BJ (cell line): ENCODE measurements at regions of chr1 and their contacts with region 1.

Region 1: DNA sequence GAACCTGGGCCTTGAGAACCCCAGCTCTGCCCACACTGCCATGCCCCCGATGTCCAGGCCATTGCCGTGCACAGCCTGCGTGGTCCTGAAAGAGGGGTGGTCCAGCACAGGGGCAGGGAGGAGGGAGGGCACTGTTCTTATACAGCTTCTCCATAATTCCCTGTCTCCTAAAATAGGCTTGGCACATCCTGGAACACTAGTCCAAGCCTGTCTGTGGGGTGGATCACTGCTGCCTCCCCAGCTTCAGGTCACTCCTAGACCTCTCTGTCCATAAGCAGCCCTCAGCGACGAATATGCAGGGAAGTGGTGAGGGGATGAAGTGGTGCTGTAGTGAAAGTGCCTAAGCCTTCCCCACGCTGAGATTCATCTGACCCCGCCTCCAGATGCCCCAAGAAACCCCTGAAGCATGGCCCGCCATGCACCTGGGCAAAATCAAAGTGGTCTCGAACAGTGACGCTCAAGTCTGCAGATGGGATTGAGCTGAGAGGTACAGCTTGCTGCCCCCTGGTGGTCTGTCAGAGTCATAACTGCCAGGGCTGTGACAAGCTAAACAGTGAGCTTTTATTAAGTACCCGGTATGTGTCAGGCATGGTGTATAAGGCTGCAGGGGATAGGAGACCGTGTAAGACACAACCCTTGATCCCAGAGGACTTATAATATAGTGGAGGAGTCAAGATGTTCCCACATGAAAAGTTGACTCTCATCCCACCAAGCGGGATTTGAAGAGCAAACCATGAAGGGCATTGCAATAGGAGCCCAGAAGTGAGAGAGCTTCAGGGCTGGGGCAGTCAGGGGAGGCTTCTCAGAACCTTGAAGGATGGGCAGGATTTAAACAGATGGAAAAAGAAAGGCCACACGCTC is 66.6 kb downstream of the FAM163A start:
- DNase-seq: no peak
- H3K4me3 ChIP-seq: no peak overlapping the region
- H3K27me3 ChIP-seq: peaks cover 7% of the 10 kb centered on the region
- CTCF ChIP-seq: peak; percentile 93

Region 2: GRCh38 chr1:179241523-179242097 is 568.1 kb before region 1 on chr1:
- CTCF ChIA-PET with region 1: no interaction called
- POLR2A ChIA-PET with region 1: no interaction called
- DNase-seq: no peak
- H3K4me3 ChIP-seq: no peak overlapping the region
- H3K27me3 ChIP-seq: no peaks in the 10 kb centered on the region
- CTCF ChIP-seq: no peak

Region 3: DNA sequence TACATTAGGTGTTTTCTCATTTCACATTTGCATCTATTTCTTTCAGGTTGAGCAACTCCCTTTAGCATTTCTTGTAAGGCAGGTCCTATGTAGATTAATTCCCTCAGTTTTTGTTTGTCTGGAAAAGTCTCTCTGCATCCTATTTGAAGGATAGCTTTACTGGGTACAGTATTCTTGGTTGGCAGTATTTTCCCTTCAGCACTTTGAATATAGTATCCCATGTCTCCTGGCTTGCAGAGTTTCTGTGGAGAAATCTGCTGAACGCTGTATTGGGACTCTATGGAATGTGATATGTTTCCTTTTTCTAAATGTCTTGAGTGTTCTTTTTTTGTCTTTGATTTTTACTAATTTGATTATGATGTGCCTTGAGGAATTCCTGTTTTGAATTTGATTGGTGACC is 95.6 kb before region 1 on chr1:
- CTCF ChIA-PET with region 1: interaction called, 447 read pairs
- POLR2A ChIA-PET with region 1: no interaction called
- DNase-seq: no peak
- H3K4me3 ChIP-seq: no peak overlapping the region
- H3K27me3 ChIP-seq: no peaks in the 10 kb centered on the region
- CTCF ChIP-seq: no peak

Region 4: DNA sequence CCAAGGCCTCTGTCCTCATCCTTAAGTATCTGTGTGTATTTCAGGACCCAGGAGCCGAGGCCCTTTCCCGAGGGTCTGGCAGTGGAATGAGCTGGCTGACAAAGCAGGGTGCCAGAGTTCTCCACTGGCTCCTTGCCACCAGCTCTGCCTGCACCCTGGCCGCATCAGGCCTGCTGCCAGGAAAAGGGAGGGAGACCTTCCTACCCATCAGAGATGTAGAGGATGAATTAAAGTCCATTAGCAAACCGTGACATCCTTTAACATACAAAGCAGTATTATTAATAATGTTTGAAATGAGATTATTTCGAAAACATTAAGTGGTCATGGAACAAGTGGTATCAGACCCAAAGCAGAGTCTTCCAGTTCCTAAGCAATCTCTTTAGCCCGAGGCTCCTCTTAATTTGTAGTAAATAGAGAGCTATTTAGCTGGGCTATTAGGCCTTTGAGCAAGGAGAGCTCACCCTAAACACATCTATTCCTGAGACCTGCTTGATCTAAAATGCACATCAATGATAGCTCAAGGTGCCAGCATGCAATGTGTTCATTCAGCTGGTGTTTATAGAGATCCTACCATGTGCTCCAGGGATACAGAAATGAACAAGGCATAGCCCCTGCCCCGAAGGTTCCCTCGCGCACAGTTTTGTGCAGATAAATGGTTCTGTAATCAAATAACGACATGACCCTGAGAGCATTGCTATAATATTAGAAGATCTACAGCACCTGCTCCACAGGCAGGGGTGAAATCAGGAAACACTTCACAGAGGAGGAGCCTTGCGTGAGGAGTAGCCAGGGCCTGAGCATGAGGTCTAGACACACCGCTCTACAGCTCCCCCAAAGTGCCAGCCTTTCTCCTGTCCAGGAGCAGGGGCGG is 22.7 kb before region 1 on chr1:
- CTCF ChIA-PET with region 1: interaction called, 16 read pairs
- POLR2A ChIA-PET with region 1: no interaction called
- DNase-seq: no peak
- H3K4me3 ChIP-seq: no peak overlapping the region
- H3K27me3 ChIP-seq: peaks cover 4% of the 10 kb centered on the region
- CTCF ChIP-seq: no peak

Region 5: DNA sequence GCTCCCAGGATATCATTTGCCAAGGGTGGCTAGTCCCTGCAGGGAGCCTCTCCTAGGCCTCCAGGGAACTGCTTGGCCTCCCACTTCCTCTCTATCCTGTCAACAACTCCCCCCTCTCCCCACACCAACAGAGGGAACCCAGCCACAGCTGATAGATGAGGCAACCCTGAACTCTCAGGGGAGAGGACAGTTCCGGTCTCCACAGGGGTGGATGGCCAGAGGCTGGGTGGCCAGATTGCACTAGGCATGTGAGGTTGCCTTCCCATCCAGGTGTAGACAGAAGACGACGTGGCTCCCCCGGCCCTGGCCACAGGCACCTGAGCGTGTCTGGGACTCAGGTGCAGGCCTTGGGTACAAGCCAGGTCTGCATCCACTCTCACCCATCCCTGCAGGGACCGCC is 14.5 kb after region 1 on chr1:
- CTCF ChIA-PET with region 1: interaction called, 60 read pairs
- POLR2A ChIA-PET with region 1: no interaction called
- DNase-seq: no peak
- H3K4me3 ChIP-seq: no peak overlapping the region
- H3K27me3 ChIP-seq: peaks cover 2% of the 10 kb centered on the region; the same call in 1 of the 2 replicates
- CTCF ChIP-seq: no peak

Region 6: DNA sequence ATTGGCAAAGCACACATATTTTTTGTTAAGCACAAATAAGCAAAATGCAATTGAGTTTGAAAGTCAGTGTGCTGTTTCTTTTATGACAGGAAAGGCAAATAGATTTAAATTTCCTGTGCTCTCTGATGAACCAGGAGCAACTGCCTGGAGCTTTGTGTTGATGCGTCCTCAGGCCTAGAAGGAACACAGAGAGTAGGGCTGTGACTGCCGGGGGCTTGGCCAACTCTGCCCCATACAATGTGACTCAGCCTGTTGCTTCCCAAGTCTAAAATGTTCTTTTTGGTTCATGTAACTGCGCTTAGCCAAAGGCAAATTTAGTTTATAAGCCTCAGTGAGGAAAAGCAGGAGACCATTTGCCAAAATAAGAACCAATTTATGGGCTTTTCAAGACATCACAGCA is 30.4 kb after region 1 on chr1:
- CTCF ChIA-PET with region 1: interaction called, 19 read pairs
- POLR2A ChIA-PET with region 1: no interaction called
- DNase-seq: no peak
- H3K4me3 ChIP-seq: no peak overlapping the region
- H3K27me3 ChIP-seq: no peaks in the 10 kb centered on the region
- CTCF ChIP-seq: no peak

Region 7: DNA sequence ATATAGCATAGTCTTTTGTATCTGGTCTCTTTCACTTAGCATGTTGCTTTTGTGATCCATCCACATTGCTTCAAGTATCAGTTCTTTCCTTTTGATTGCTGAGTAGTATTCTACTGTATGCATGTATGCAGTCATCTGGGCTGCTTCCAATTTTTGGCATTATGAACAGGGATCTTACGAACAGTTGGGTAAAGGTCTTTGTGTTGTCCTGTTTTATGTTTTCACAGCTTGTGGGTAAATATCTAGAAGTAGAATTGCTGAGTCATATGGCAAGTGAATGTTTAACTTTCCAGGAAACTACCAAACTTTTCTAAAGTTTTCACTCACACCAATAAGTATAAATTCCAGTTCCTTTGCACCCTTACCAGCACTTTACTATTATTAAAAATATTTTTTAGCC is 481.3 kb after region 1 on chr1:
- CTCF ChIA-PET with region 1: no interaction called
- POLR2A ChIA-PET with region 1: no interaction called
- DNase-seq: no peak
- H3K4me3 ChIP-seq: no peak overlapping the region
- H3K27me3 ChIP-seq: no peaks in the 10 kb centered on the region
- CTCF ChIP-seq: no peak